Caco-2 (cell line): ENCODE measurements at regions of chr2 and their contacts with region 1.

Region 1: DNA sequence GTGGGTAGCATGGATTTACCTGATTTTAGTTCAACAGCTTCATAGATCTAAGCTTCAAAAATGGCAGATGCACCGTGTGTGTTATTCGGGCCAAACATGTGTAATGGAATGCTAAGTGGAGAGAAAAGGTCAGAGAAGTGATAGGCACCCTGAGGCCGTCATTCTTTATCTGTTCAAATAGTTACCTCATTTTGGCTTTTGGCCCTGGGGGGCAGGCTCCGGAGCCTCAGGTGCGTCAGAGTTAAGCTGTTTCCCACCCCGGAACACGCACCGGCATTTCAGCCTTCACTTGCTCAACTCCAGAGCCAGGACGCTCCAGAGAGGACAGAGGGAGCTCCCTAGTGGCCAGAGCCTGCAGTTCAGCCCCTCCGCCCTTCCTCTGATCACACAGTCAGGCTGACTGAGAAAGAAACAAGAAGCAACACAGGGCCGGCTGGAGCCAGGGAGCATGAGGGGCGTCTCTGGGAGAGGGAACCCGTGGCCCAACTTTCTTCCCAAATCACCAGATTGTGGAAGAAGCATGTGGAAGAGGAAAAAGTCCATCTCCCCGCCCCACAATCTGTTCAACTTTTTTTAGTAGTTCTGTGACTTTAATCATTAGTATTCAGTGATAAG is 135.2 kb upstream of the EPC2 start:
- DNase-seq: peak; percentile 90 to 91
- H3K4me3 ChIP-seq: peak overlapping the region; percentile 38
- H3K4me3 Mint-ChIP-seq: peak overlapping the region; percentile 78
- H3K27ac Mint-ChIP-seq: peak overlapping the region; percentile 18
- H3K4me1 ChIP-seq: no peaks in the 10 kb centered on the region
- H3K4me1 Mint-ChIP-seq: no peaks in the 10 kb centered on the region
- H3K27me3 ChIP-seq: no peaks in the 10 kb centered on the region
- H3K27me3 Mint-ChIP-seq: peaks cover 6% of the 10 kb centered on the region
- CTCF ChIP-seq: peak; percentile 92 to 97

Region 2: DNA sequence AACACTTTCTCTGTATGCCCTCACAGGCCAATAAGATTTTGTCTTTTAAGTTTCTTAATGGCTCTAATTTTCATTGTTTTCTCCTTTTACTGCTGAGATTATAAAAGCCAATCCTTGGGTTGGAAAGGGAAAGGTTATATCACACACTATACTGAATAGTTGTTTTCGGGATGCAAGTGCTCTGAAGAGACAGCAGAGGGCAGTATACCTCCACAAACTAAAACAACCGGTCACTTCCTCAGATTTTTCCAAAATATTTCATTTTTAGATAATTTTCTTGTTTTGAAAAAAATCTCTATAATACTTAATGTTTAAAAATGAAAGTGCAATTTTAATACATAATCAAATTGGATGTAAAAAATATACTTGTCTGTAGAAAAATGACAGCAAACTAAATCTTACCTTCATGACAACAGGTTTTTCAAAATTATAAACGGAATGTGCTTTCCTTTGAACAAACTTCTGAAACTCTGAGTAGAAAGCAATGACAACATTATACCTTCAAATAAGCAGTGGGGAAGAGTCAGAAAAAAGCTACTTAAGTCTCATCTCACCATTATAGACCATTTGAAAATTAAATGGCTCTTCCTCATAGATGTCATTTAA is 571.5 kb before region 1 on chr2:
- CTCF ChIA-PET with region 1: no interaction called
- POLR2A ChIA-PET with region 1: no interaction called
- intact Hi-C with region 1: loop called (anchors 1 kb)
- DNase-seq: peak in 1 of 2 experiments; percentile 20
- H3K4me3 ChIP-seq: no peak overlapping the region
- H3K4me3 Mint-ChIP-seq: no peak overlapping the region
- H3K27ac Mint-ChIP-seq: no peak overlapping the region
- H3K4me1 ChIP-seq: no peaks in the 10 kb centered on the region
- H3K4me1 Mint-ChIP-seq: no peaks in the 10 kb centered on the region
- H3K27me3 ChIP-seq: no peaks in the 10 kb centered on the region
- H3K27me3 Mint-ChIP-seq: no peaks in the 10 kb centered on the region
- CTCF ChIP-seq: peak; percentile 75 to 82

Region 3: GRCh38 chr2:148020111-148021058 is 489.0 kb before region 1 on chr2 and contains the start of gene ORC4:
- CTCF ChIA-PET with region 1: interaction called, 31 read pairs
- POLR2A ChIA-PET with region 1: no interaction called
- intact Hi-C with region 1: loop called (anchors 1 kb)
- DNase-seq: peak; percentile 98 to 100
- H3K4me3 ChIP-seq: peak within 1 kb of the TSS; percentile 84
- H3K4me3 Mint-ChIP-seq: peak within 1 kb of the TSS; percentile 89
- H3K27ac Mint-ChIP-seq: peak within 1 kb of the TSS; percentile 85
- H3K4me1 ChIP-seq: peaks cover 6% of the 10 kb centered on the region; the same call in 1 of the 2 replicates
- H3K4me1 Mint-ChIP-seq: peaks cover 15% of the 10 kb centered on the region
- H3K27me3 ChIP-seq: no peaks in the 10 kb centered on the region
- H3K27me3 Mint-ChIP-seq: no peaks in the 10 kb centered on the region
- CTCF ChIP-seq: peak; percentile 38 to 73
- total RNA-seq, gene ORC4: 56.3 and 59.9 TPM in 2 replicates

Region 4: GRCh38 chr2:148209603-148210002 is 299.8 kb before region 1 on chr2:
- CTCF ChIA-PET with region 1: interaction called, 12 read pairs
- POLR2A ChIA-PET with region 1: no interaction called
- intact Hi-C with region 1: loop called (anchors 10 kb)
- DNase-seq: peak; percentile 54 to 69
- H3K4me3 ChIP-seq: no peak overlapping the region
- H3K4me3 Mint-ChIP-seq: no peak overlapping the region
- H3K27ac Mint-ChIP-seq: no peak overlapping the region
- H3K4me1 ChIP-seq: peaks cover 9% of the 10 kb centered on the region
- H3K4me1 Mint-ChIP-seq: peaks cover 15% of the 10 kb centered on the region
- H3K27me3 ChIP-seq: no peaks in the 10 kb centered on the region
- H3K27me3 Mint-ChIP-seq: no peaks in the 10 kb centered on the region
- CTCF ChIP-seq: no peak

Region 5: DNA sequence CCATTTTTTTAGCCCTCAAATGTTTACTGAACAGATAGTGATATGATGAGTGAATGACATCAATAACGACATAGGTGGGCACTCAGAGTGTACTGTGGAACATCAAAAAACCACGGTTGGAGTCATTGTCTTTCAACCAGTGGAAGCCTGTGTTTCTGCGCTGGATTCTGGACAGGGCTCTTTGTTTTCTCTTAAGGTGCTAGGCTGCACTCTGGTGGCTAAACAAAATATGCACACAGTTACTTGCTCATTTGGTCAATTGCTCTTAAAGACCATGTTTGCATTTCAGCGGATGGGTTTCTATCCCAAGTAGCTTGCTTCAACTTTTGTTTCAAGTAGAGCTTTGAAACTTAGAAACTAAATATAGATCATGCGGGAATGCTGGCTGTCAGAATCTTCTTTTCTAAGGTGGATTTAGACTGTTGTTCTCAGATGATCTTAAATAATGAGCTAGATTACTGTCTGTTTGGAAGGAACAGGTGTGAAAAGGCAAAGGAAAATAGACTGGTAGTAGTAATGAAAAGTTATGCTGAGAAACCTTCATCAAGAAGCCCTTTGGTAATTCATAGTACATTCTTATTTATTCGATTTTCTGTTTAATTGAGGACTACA is 480.6 kb after region 1 on chr2:
- CTCF ChIA-PET with region 1: interaction called, 5 read pairs
- POLR2A ChIA-PET with region 1: no interaction called
- intact Hi-C with region 1: loop called (anchors 1 kb)
- DNase-seq: peak; percentile 73 to 75
- H3K4me3 ChIP-seq: no peak overlapping the region
- H3K4me3 Mint-ChIP-seq: no peak overlapping the region
- H3K27ac Mint-ChIP-seq: no peak overlapping the region
- H3K4me1 ChIP-seq: no peaks in the 10 kb centered on the region
- H3K4me1 Mint-ChIP-seq: peaks cover 12% of the 10 kb centered on the region
- H3K27me3 ChIP-seq: 0 out of 2 replicates have a peak, but pooled peaks cover 1% of the 10 kb centered on the region
- H3K27me3 Mint-ChIP-seq: peaks cover 2% of the 10 kb centered on the region
- CTCF ChIP-seq: peak; percentile 71 to 90